ENCODE measurements at regions of chr7 and their contacts with region 1.

Region 1: DNA sequence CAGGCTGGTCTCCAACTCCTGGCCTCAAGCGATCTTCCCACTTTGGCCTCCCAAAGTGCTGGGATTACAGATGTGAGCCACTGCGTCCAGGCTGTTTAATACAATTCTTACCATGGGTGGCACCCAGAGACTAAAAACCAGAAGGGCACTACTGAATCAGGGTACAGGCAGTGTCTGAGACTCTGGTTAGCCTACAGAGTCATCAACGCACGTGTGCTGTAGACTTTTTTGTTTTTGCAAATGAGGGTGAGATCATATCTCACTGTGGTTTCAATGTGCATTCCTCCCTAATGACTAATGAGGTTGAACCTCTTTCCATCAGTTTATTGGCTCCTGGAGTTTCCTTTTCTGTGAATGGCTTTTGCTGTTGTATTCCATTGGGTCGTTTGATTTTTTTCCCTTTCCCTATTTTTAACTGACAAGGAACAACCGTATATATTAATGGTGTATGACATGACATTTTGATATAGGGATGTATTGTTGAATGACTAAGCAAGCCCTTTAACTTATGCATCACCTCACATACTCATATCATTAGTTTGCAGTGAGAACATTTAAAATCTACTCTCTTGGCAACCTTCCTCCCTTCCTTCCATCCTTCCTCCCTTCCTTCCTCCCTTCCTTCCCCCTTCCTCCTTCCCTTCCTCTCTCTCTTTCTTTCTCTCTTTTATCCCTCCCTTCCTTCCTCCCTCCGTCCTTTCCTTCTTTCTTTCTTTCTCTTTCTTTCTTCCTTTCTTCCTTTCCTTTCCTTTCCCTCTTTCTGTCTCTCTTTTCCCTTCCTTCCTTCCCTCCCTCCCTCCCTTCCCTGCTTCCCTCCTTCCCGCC is 9.3 kb upstream of the METTL27 start:
- DNase-seq: peak; percentile 60
- ATAC-seq: peak; percentile 96
- H3K4me3 Mint-ChIP-seq: no peak overlapping the region
- H3K27ac Mint-ChIP-seq: peak overlapping the region; percentile 65
- H3K4me1 Mint-ChIP-seq: peaks cover 33% of the 10 kb centered on the region
- H3K27me3 Mint-ChIP-seq: peaks cover 12% of the 10 kb centered on the region

Region 2: GRCh38 chr7:73811760-73812168 is 39.9 kb before region 1 on chr7:
- CTCF ChIA-PET with region 1: interaction called, 15 read pairs
- POLR2A ChIA-PET with region 1: interaction called, 3 read pairs
- intact Hi-C with region 1: loop called (anchors 1 kb)
- DNase-seq: peak; percentile 79
- ATAC-seq: peak; percentile 86
- H3K4me3 Mint-ChIP-seq: no peak overlapping the region
- H3K27ac Mint-ChIP-seq: no peak overlapping the region
- H3K4me1 Mint-ChIP-seq: no peaks in the 10 kb centered on the region
- H3K27me3 Mint-ChIP-seq: peaks cover 7% of the 10 kb centered on the region

Region 3: GRCh38 chr7:73827567-73828106 is 24.0 kb before region 1 on chr7:
- CTCF ChIA-PET with region 1: interaction called, 11 read pairs
- POLR2A ChIA-PET with region 1: no interaction called
- intact Hi-C with region 1: no loop called
- DNase-seq: no peak
- ATAC-seq: no peak
- H3K4me3 Mint-ChIP-seq: no peak overlapping the region
- H3K27ac Mint-ChIP-seq: no peak overlapping the region
- H3K4me1 Mint-ChIP-seq: peaks cover 26% of the 10 kb centered on the region
- H3K27me3 Mint-ChIP-seq: peaks cover 5% of the 10 kb centered on the region

Measured in activated CD4-positive, alpha-beta T cell treated with anti-CD3 and anti-CD28 coated beads for 36 hours (primary cell).